Posterior cingulate gyrus (tissue), 11 donors: ENCODE measurements at regions of chr14 and their contacts with region 1.

Region 1: GRCh38 chr14:93076755-93077154 is 39.0 kb downstream of the ITPK1 start:
- DNase-seq: no peak

Region 2: GRCh38 chr14:93051600-93052546 is 24.9 kb before region 1 on chr14:
- intact Hi-C with region 1: loop called (anchors 2 kb)
- DNase-seq: no peak

Region 3: GRCh38 chr14:93200553-93200952 is 123.8 kb after region 1 on chr14:
- intact Hi-C with region 1: no loop called
- DNase-seq: no peak